Endothelial cell of umbilical vein (primary cell): ENCODE measurements at regions of chr20 and their contacts with region 1.

Region 1: GRCh38 chr20:39874049-39874888 is 814.8 kb downstream of the MAFB start:
- DNase-seq: peak; percentile 90
- H3K4me3 ChIP-seq: peak overlapping the region in 1 of 3 experiments; percentile 32
- H3K27ac ChIP-seq: no peak overlapping the region
- H3K4me1 ChIP-seq: peaks cover 2% of the 10 kb centered on the region
- H3K27me3 ChIP-seq: peaks cover 0 to 2% of the 10 kb centered on the region in 2 experiments
- CTCF ChIP-seq: peak; percentile 96 to 98
- POLR2A ChIP-seq: no peak

Region 2: GRCh38 chr20:39112178-39112743 is 762.0 kb before region 1 on chr20:
- CTCF ChIA-PET with region 1: interaction called, 20 read pairs
- POLR2A ChIA-PET with region 1: no interaction called
- dilution Hi-C with region 1: no loop called
- intact Hi-C with region 1: loop called (anchors 1 kb)
- DNase-seq: peak; percentile 41
- H3K4me3 ChIP-seq: no peak overlapping the region
- H3K27ac ChIP-seq: no peak overlapping the region
- H3K4me1 ChIP-seq: peaks cover 22% of the 10 kb centered on the region
- H3K27me3 ChIP-seq: peaks cover 2 to 20% of the 10 kb centered on the region in 2 experiments
- CTCF ChIP-seq: peak; percentile 49 to 62
- POLR2A ChIP-seq: no peak

Region 3: GRCh38 chr20:39282619-39283392 is 591.5 kb before region 1 on chr20:
- CTCF ChIA-PET with region 1: interaction called, 11 read pairs
- POLR2A ChIA-PET with region 1: no interaction called
- dilution Hi-C with region 1: no loop called
- intact Hi-C with region 1: no loop called
- DNase-seq: no peak
- H3K4me3 ChIP-seq: no peak overlapping the region
- H3K27ac ChIP-seq: no peak overlapping the region
- H3K4me1 ChIP-seq: no peaks in the 10 kb centered on the region
- H3K27me3 ChIP-seq: no peaks in the 10 kb centered on the region
- CTCF ChIP-seq: no peak
- POLR2A ChIP-seq: no peak

Region 4: GRCh38 chr20:39289316-39289715 is 585.0 kb before region 1 on chr20:
- CTCF ChIA-PET with region 1: interaction called, 19 read pairs
- POLR2A ChIA-PET with region 1: no interaction called
- dilution Hi-C with region 1: no loop called
- intact Hi-C with region 1: loop called (anchors 1 kb)
- DNase-seq: no peak
- H3K4me3 ChIP-seq: no peak overlapping the region
- H3K27ac ChIP-seq: no peak overlapping the region
- H3K4me1 ChIP-seq: no peaks in the 10 kb centered on the region
- H3K27me3 ChIP-seq: no peaks in the 10 kb centered on the region
- CTCF ChIP-seq: peak in 1 of 2 donors; percentile 4
- POLR2A ChIP-seq: no peak

Region 5: GRCh38 chr20:39588148-39588757 is 286.0 kb before region 1 on chr20:
- CTCF ChIA-PET with region 1: interaction called, 8 read pairs
- POLR2A ChIA-PET with region 1: no interaction called
- dilution Hi-C with region 1: no loop called
- intact Hi-C with region 1: loop called (anchors 1 kb)
- DNase-seq: peak; percentile 89
- H3K4me3 ChIP-seq: peak overlapping the region in 1 of 3 experiments; percentile 24
- H3K27ac ChIP-seq: peak overlapping the region; percentile 74
- H3K4me1 ChIP-seq: peaks cover 21% of the 10 kb centered on the region
- H3K27me3 ChIP-seq: no peaks in the 10 kb centered on the region
- CTCF ChIP-seq: no peak
- POLR2A ChIP-seq: no peak

Region 6: GRCh38 chr20:39661833-39662232 is 212.4 kb before region 1 on chr20:
- CTCF ChIA-PET with region 1: interaction called, 4 read pairs
- POLR2A ChIA-PET with region 1: no interaction called
- dilution Hi-C with region 1: no loop called
- intact Hi-C with region 1: loop called (anchors 1 kb)
- DNase-seq: peak; percentile 7
- H3K4me3 ChIP-seq: no peak overlapping the region
- H3K27ac ChIP-seq: no peak overlapping the region
- H3K4me1 ChIP-seq: peaks cover 28% of the 10 kb centered on the region
- H3K27me3 ChIP-seq: no peaks in the 10 kb centered on the region
- CTCF ChIP-seq: no peak
- POLR2A ChIP-seq: no peak

Region 7: DNA sequence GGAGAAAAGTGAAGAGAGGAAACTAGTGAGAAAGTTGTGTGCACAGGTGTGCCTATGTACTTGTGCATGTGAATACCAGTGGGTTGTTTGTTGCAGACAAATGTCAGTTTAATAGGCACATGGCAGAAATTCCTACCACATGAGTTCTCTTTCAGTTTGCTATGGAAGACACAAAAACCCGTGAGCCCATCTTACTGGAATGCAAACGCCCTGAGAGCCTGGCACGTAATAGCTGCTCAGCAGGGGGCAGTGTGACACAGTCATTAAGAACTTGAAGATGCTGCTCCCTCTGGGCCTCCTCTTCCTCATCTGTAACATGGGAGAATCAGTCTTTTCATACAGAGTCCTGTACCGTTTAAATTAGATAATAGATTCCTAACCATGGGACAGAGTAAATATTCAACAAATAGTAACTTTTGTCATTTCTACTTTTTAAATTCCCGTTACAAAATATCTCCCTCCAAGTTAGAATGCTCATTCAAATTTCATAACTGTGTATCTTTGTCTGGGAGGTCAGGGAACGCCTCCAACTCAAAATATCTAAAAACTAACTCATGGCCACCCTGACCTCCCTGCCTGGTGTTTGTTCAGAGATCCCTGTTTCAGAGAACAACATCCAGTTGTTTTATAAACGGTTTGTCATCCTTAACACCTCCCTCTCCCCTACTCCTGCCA is 11.8 kb after region 1 on chr20:
- CTCF ChIA-PET with region 1: interaction called, 11 read pairs
- POLR2A ChIA-PET with region 1: no interaction called
- dilution Hi-C with region 1: no loop called
- intact Hi-C with region 1: no loop called
- DNase-seq: peak; percentile 58
- H3K4me3 ChIP-seq: no peak overlapping the region
- H3K27ac ChIP-seq: no peak overlapping the region
- H3K4me1 ChIP-seq: no peaks in the 10 kb centered on the region
- H3K27me3 ChIP-seq: no peaks in the 10 kb centered on the region
- CTCF ChIP-seq: peak; percentile 58
- POLR2A ChIP-seq: no peak

Region 8: GRCh38 chr20:39935901-39936300 is 61.6 kb after region 1 on chr20:
- CTCF ChIA-PET with region 1: no interaction called
- POLR2A ChIA-PET with region 1: no interaction called
- dilution Hi-C with region 1: no loop called
- intact Hi-C with region 1: no loop called
- DNase-seq: no peak
- H3K4me3 ChIP-seq: no peak overlapping the region
- H3K27ac ChIP-seq: no peak overlapping the region
- H3K4me1 ChIP-seq: no peaks in the 10 kb centered on the region
- H3K27me3 ChIP-seq: no peaks in the 10 kb centered on the region
- CTCF ChIP-seq: no peak
- POLR2A ChIP-seq: no peak